PC-3 (cell line): ENCODE measurements at regions of chr2 and their contacts with region 1.

Region 1: GRCh38 chr2:200259577-200260008 is 46.9 kb upstream of the SPATS2L start:
- DNase-seq: peak; percentile 97
- ATAC-seq: peak; percentile 89
- H3K4me3 ChIP-seq: peak overlapping the region; percentile 58
- H3K27ac ChIP-seq: peak overlapping the region; percentile 94
- H3K4me1 ChIP-seq: peaks cover 30% of the 10 kb centered on the region
- H3K27me3 ChIP-seq: no peaks in the 10 kb centered on the region
- CTCF ChIP-seq: no peak

Region 2: DNA sequence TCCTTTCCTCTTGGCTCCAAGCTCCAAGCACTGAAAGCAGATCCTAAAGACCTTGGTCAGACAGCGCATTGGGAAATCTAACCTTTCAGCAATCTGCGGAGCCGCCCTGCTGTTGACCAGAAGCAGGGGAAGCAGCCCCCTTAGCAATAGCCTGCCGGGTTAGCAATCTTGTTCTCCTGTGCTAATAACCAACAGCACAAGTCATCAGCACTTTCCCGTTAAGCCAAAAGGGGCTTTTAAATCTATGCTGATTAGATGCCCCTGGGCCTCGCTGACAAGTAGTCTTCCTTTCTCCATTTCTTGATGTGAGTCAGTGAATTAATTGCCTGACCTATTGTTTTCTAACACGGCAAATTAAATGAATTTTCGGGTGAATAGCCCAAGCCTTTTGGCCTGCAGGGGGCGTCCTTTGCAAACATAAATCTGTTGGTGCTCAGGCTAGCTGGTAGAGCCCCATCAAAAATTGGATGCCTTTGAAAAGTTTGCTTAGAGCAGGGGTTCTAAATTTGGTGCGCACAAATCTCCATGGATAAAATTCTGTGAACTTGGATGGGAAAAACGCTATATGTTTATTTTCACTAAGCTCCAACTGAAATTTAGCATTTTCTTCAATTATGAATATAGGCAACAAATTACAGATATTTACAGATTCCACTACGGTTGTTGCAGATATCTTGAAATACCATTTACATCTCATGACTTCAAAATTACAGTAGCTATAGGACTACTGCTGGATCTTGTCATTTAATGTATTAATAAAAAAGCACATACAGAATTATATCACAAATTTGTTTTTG is 279.6 kb before region 1 on chr2:
- CTCF ChIA-PET with region 1: no interaction called
- POLR2A ChIA-PET with region 1: no interaction called
- intact Hi-C with region 1: loop called (anchors 2 kb)
- DNase-seq: peak; percentile 89
- ATAC-seq: peak; percentile 52
- H3K4me3 ChIP-seq: no peak overlapping the region
- H3K27ac ChIP-seq: no peak overlapping the region
- H3K4me1 ChIP-seq: peaks cover 26% of the 10 kb centered on the region
- H3K27me3 ChIP-seq: no peaks in the 10 kb centered on the region
- CTCF ChIP-seq: peak; percentile 96

Region 3: DNA sequence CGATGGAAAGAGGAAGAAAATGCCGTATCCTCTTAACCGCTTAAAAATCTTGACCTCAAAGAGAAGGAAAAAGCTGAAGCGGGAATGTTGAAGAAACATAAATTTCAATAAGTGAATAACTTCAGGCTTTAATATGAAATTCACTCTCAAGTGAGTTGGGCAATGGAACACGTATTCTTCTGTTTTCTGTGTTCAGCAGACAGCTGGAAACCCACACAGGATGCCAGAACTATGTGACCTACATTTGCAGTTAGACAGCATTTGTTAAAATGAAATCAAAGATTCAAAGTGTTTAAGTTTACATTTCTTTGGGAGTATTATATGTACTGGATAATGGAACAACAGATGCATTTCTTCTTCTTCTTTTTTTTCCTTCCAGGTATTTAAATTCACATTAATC is 33.6 kb before region 1 on chr2:
- CTCF ChIA-PET with region 1: no interaction called
- POLR2A ChIA-PET with region 1: no interaction called
- intact Hi-C with region 1: no loop called
- DNase-seq: no peak
- ATAC-seq: no peak
- H3K4me3 ChIP-seq: no peak overlapping the region
- H3K27ac ChIP-seq: no peak overlapping the region
- H3K4me1 ChIP-seq: peaks cover 2% of the 10 kb centered on the region; the same call in 1 of the 2 replicates
- H3K27me3 ChIP-seq: no peaks in the 10 kb centered on the region
- CTCF ChIP-seq: no peak